K562 (cell line): ENCODE measurements at regions of chr11 and their contacts with region 1.

Region 1: DNA sequence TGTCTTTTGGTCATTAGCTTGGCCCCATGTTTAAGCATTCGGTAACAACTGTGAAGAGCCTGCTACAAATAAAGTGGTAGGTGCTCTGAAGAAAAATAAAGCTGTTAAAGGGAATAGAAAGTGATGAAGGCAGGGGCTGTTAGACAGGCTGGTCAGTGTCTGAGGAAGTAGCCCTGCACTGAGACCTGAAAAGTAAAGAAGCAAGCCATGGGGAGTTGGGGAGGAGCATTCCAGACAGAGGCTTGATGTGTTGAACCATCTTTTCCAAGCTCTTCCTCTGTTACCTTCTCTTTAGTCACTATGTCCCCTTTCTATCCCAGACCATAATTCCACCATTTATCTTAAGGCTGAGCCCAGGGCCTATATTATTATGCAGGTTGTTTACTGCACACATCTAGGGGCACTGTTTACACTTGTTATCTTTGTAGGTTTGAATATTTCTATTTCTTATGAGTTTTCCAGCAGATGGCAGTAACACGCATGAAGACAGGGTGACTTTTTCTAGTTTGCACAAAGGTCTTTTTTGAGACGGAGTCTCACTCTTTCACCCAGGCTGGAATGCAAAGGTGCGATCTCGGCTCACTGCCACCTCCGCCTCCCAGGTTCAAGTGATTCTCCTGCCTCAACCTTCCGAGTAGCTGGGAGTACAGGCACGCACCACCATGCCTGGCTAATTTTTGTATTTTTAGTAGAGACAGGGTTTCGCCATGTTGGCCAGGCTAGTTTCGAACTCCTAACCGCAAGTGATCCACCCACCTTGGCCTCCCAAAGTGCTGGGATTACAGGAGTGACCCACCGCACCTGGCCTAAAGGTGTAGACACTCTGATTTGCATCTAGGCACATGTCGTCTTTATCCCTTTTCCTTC is 23.0 kb downstream of the ZFTA start:
- DNase-seq: peak in 1 of 4 experiments; percentile 50
- ATAC-seq: peak; percentile 80
- H3K4me3 ChIP-seq: no peak overlapping the region; the same call in 1 of the 2 replicates
- H3K27ac ChIP-seq: peak overlapping the region; percentile 57
- H3K4me1 ChIP-seq: peaks cover 11 to 25% of the 10 kb centered on the region in 2 experiments; a peak in 4 of 5 replicates
- H3K27me3 ChIP-seq: no peaks in the 10 kb centered on the region
- CTCF ChIP-seq: peak; percentile 40 to 57 (median 50); a peak in 5 of 6 replicates
- EP300 ChIP-seq: no peak
- POLR2A ChIP-seq: no peak
- RAD21 ChIP-seq: peak in 1 of 2 experiments; percentile 19; a peak in 1 of 4 replicates

Region 2: DNA sequence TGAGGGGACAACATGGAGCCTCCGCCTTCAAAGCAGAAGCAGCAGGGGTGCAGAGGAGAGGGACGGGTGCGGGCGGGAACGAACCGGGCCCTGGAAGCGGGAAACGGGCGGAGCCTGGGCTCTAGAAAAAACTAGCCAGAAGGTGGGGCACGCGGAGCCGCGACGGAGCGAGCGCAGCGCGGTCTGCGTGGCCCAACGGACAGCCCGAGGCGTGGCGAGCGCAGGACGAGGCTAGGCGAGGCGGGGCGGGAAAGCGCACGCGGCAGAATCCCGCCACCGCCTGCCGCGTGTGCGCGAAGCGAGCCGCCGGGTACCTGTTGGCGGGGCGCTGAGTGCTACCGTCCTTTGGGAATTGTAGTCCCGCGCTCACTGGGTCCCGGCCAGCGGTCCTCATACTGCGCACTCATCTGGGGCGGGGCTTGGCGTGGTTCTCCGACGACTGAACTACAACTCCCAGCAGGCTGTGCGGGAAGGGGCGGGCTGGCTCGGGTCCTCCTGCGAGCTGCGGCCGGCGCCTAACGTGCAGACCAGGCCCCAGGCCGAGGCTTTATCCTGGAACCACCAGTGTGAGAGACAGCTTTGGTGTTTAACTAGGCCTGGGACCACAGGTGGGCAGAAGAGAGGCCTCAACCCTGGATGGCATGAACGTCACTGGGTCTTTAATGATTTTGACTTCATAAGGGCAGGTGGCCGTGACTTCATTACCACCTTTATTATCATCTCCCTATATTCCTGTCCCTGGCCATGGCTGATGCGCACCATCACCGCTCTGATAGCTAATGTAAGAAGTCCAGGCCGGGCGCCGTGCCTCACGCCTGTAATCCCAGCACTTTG is 74.0 kb before region 1 on chr11 and contains the start of gene ATL3:
- CTCF ChIA-PET with region 1: no interaction called
- POLR2A ChIA-PET with region 1: no interaction called
- in situ Hi-C with region 1: no loop called
- intact Hi-C with region 1: loop called (anchors 2 kb)
- DNase-seq: peak; percentile 92 to 99 (median 95)
- ATAC-seq: peak; percentile 97
- H3K4me3 ChIP-seq: peak within 1 kb of the TSS; percentile 72
- H3K27ac ChIP-seq: peak within 1 kb of the TSS; percentile 95
- H3K4me1 ChIP-seq: peaks cover 16 to 29% of the 10 kb centered on the region in 2 experiments; a peak in 4 of 5 replicates
- H3K27me3 ChIP-seq: no peaks in the 10 kb centered on the region
- CTCF ChIP-seq: peak in 2 of 3 experiments; percentile 13 to 29; a peak in 3 of 6 replicates
- EP300 ChIP-seq: peak; percentile 45
- POLR2A ChIP-seq: peak; percentile 66; the same call in 1 of the 2 replicates
- RAD21 ChIP-seq: peak; percentile 31 to 33
- polyA plus RNA-seq, gene ATL3: 23.5 to 34.2 TPM